ENCODE measurements at regions of chr19 and their contacts with region 1.

Region 1: DNA sequence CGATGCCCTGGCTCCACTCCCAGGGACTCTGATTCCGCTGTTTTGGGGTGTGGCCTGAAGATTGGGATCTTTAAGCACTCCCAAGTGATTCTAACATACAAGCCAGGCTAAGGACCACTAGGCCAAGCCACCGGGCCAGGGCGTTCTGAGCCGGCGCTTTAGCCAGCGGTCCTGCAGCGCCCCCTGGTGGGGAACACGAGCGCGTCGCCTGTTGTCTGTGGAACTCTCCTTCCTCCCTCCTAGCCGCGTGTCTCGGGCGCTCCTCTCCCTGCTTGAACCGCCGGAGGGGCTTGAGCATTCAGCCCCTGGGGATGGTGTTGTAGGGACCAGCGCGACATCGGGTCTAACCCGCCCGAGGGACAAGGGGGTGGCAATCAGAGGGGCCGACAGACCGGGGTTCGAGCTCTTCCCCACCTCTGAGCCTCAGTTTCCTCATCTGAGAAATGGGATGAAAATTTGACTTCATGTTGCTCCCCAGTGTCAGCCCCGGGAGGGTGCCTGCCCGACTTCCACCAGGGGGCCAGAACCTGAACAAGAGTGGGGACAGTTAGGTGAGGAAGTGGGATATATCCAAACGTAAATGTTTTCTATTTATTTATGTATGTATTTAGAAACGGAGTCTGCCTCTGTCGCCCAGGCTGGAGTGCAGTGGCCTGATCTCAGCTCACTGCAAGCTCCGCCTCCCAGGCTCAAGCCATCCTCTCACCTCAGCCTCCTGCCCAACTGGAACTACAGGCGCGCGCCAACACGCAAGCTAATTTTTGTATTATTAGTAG is 18.0 kb upstream of the PNMA8B start:
- DNase-seq: peak; percentile 86
- ATAC-seq: peak; percentile 89
- H3K4me3 Mint-ChIP-seq: no peak overlapping the region
- H3K27ac Mint-ChIP-seq: no peak overlapping the region
- H3K4me1 Mint-ChIP-seq: peaks cover 20% of the 10 kb centered on the region
- H3K27me3 Mint-ChIP-seq: peaks cover 14% of the 10 kb centered on the region

Region 2: DNA sequence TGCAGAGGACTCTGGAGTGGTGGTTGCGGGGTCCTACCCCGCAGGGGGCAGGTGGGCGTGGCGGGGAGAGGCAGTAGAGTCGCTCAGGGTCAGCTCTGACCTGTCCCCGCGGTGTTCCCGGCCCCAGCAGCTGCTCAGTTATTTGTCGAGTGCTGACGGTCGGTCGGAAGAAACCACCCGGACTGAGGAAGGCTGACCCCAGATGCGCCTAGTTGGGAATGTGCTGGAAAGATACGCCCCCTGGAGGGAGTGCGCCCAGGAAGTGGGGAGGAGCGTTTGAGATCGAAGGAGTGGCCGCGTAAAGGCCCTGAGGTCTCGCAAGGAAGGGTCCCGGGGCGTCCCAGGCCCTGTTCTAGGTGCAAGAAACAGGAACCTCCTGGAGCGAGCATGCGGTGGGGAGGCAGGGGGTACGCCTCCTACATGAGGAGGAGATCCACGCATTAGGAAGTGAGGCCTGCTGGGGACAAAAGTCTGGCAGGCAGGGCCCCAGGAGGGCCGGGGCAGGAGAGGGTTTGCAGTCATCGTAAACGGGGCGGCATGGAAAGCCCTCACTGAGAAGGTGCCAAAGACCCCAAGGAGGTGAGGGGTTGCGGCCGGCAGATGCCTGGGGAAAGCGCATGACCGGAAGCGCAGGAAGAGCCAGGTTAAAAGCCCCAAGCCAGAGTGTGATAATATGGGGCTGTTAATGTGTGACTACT is 109.4 kb before region 1 on chr19:
- CTCF ChIA-PET with region 1: interaction called, 13 read pairs
- POLR2A ChIA-PET with region 1: no interaction called
- DNase-seq: no peak
- ATAC-seq: no peak
- H3K4me3 Mint-ChIP-seq: no peak overlapping the region
- H3K27ac Mint-ChIP-seq: no peak overlapping the region
- H3K4me1 Mint-ChIP-seq: peaks cover 15% of the 10 kb centered on the region
- H3K27me3 Mint-ChIP-seq: peaks cover 54% of the 10 kb centered on the region

Region 3: GRCh38 chr19:46466536-46467196 is 47.0 kb before region 1 on chr19:
- CTCF ChIA-PET with region 1: no interaction called
- POLR2A ChIA-PET with region 1: no interaction called
- DNase-seq: no peak
- ATAC-seq: no peak
- H3K4me3 Mint-ChIP-seq: no peak overlapping the region
- H3K27ac Mint-ChIP-seq: no peak overlapping the region
- H3K4me1 Mint-ChIP-seq: no peaks in the 10 kb centered on the region
- H3K27me3 Mint-ChIP-seq: peaks cover 22% of the 10 kb centered on the region